Activated B cell treated with CpG ODN at 0.5 μM for 24 hours (primary cell): ENCODE measurements at regions of chr12 and their contacts with region 1.

Region 1: GRCh38 chr12:124713436-124714082 is 146.1 kb upstream of the NCOR2 start:
- DNase-seq: peak; percentile 46
- ATAC-seq: peak; percentile 90
- H3K4me3 Mint-ChIP-seq: peak overlapping the region; percentile 52
- H3K27ac Mint-ChIP-seq: peak overlapping the region; percentile 77
- H3K4me1 Mint-ChIP-seq: peaks cover 19% of the 10 kb centered on the region
- H3K27me3 Mint-ChIP-seq: no peaks in the 10 kb centered on the region
- CTCF ChIP-seq: no peak

Region 2: GRCh38 chr12:124477107-124477915 is 236.2 kb before region 1 on chr12:
- CTCF ChIA-PET with region 1: no interaction called
- POLR2A ChIA-PET with region 1: no interaction called
- intact Hi-C with region 1: loop called (anchors 1 kb)
- DNase-seq: no peak
- ATAC-seq: peak; percentile 68
- H3K4me3 Mint-ChIP-seq: peak overlapping the region; percentile 57
- H3K27ac Mint-ChIP-seq: peak overlapping the region; percentile 75
- H3K4me1 Mint-ChIP-seq: peaks cover 55% of the 10 kb centered on the region
- H3K27me3 Mint-ChIP-seq: no peaks in the 10 kb centered on the region
- CTCF ChIP-seq: no peak

Region 3: GRCh38 chr12:124667506-124668326 is 45.8 kb before region 1 on chr12:
- CTCF ChIA-PET with region 1: no interaction called
- POLR2A ChIA-PET with region 1: no interaction called
- intact Hi-C with region 1: no loop called
- DNase-seq: no peak
- ATAC-seq: no peak
- H3K4me3 Mint-ChIP-seq: no peak overlapping the region
- H3K27ac Mint-ChIP-seq: no peak overlapping the region
- H3K4me1 Mint-ChIP-seq: peaks cover 6% of the 10 kb centered on the region
- H3K27me3 Mint-ChIP-seq: peaks cover 6% of the 10 kb centered on the region
- CTCF ChIP-seq: no peak

Region 4: GRCh38 chr12:124680863-124681778 is 32.4 kb before region 1 on chr12:
- CTCF ChIA-PET with region 1: no interaction called
- POLR2A ChIA-PET with region 1: no interaction called
- intact Hi-C with region 1: loop called (anchors 1 kb)
- DNase-seq: peak; percentile 26
- ATAC-seq: peak; percentile 96
- H3K4me3 Mint-ChIP-seq: no peak overlapping the region
- H3K27ac Mint-ChIP-seq: no peak overlapping the region
- H3K4me1 Mint-ChIP-seq: peaks cover 14% of the 10 kb centered on the region
- H3K27me3 Mint-ChIP-seq: peaks cover 6% of the 10 kb centered on the region
- CTCF ChIP-seq: no peak

Region 5: DNA sequence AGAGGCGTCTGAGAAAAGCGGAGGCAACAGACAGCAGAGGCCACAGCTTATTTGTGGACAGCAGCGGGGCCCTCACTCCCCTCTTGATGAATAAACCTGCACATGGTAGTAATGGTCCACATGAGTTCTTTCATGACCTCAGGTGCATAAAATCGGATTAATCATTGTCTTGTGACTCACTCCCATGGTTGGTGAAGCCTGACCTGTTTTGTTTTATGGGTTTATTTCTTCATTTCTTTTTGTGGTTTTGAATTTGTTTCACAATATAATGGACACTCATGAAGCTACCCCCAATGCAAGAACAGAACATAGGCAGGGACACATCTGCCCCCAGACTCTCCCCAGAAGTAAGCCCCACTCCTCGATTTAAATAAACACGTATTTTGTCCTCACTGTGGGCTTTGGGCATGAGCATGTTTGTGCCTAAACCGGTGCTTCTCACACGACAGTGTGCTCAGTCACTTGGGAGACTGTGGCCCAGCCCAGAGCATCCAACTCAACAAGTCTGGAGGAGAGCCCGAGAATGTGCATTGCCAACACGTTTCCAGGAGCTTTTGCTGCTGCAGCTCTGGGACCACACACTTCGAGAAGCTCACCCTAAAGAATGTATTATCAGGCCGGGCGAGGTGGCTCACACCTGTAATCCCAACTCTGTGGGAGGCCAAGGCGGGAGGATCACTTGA is 34.0 kb after region 1 on chr12:
- CTCF ChIA-PET with region 1: no interaction called
- POLR2A ChIA-PET with region 1: no interaction called
- intact Hi-C with region 1: loop called (anchors 1 kb)
- DNase-seq: no peak
- ATAC-seq: peak; percentile 56
- H3K4me3 Mint-ChIP-seq: no peak overlapping the region
- H3K27ac Mint-ChIP-seq: no peak overlapping the region
- H3K4me1 Mint-ChIP-seq: peaks cover 20% of the 10 kb centered on the region
- H3K27me3 Mint-ChIP-seq: peaks cover 19% of the 10 kb centered on the region
- CTCF ChIP-seq: no peak

Region 6: GRCh38 chr12:124786061-124786964 is 72.8 kb after region 1 on chr12:
- CTCF ChIA-PET with region 1: no interaction called
- POLR2A ChIA-PET with region 1: no interaction called
- intact Hi-C with region 1: no loop called
- DNase-seq: no peak
- ATAC-seq: no peak
- H3K4me3 Mint-ChIP-seq: no peak overlapping the region
- H3K27ac Mint-ChIP-seq: no peak overlapping the region
- H3K4me1 Mint-ChIP-seq: peaks cover 7% of the 10 kb centered on the region
- H3K27me3 Mint-ChIP-seq: no peaks in the 10 kb centered on the region
- CTCF ChIP-seq: no peak